GM12878 (cell line): ENCODE measurements at regions of chr3 and their contacts with region 1.

Region 1: GRCh38 chr3:121883507-121883906 is 10.7 kb upstream of the SLC15A2 start:
- DNase-seq: no peak
- ATAC-seq: peak; percentile 73
- H3K4me3 ChIP-seq: no peak overlapping the region
- H3K27ac ChIP-seq: no peak overlapping the region
- H3K4me1 ChIP-seq: no peaks in the 10 kb centered on the region
- H3K27me3 ChIP-seq: no peaks in the 10 kb centered on the region
- CTCF ChIP-seq: peak; percentile 21 to 38 (median 27); a peak in 1 of 6 replicates
- EP300 ChIP-seq: no peak
- POLR2A ChIP-seq: no peak
- RAD21 ChIP-seq: peak; percentile 48

Region 2: GRCh38 chr3:121654493-121655385 is 228.8 kb before region 1 on chr3:
- CTCF ChIA-PET with region 1: no interaction called
- POLR2A ChIA-PET with region 1: no interaction called
- RAD21 ChIA-PET with region 1: no interaction called
- SMC1A ChIA-PET with region 1: no interaction called
- in situ Hi-C with region 1: no loop called
- intact Hi-C with region 1: no loop called
- DNase-seq: peak; percentile 36
- ATAC-seq: peak; percentile 89
- H3K4me3 ChIP-seq: peak overlapping the region; percentile 12; the same call in 1 of the 2 replicates
- H3K27ac ChIP-seq: peak overlapping the region; percentile 68; the same call in 1 of the 2 replicates
- H3K4me1 ChIP-seq: peaks cover 34% of the 10 kb centered on the region
- H3K27me3 ChIP-seq: no peaks in the 10 kb centered on the region
- CTCF ChIP-seq: no peak
- EP300 ChIP-seq: 0 out of 4 replicates have a peak, but pooled peaks have one; percentile 16 to 21
- POLR2A ChIP-seq: no peak
- RAD21 ChIP-seq: no peak

Region 3: DNA sequence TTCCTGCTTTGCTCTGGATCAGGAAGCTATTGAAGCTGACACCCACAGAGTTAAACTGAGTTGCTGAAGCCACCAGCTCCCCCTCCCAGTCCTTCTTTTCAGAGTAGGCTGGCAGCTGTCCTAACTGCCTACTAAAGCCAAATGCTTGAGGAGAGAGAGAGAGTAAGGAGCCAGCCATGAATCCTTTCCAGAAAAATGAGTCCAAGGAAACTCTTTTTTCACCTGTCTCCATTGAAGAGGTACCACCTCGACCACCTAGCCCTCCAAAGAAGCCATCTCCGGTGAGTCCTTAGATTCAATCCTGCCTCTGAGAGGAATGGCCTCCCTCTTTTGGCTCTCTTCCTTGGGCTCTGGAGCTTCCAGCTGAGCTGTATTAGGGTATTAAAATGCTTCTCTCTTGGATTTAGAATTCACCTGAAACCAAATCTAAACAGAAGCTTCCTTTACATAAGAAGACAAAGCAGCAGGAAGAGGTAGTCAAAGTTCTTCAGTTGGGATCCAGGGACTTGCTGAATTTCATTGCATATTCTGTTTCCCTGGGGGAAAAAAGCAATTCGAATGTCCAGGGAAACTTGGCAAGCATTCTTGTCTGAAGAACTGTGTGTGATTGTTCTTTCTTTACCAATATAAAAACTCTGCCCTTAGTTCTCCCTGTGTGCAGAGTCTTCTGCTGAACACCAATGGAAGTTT is 10.9 kb after region 1 on chr3 and contains the start of gene SLC15A2:
- CTCF ChIA-PET with region 1: interaction called, 10 read pairs
- POLR2A ChIA-PET with region 1: no interaction called
- RAD21 ChIA-PET with region 1: no interaction called
- SMC1A ChIA-PET with region 1: interaction called, 8 read pairs
- in situ Hi-C with region 1: no loop called
- intact Hi-C with region 1: no loop called
- DNase-seq: no peak
- ATAC-seq: no peak
- H3K4me3 ChIP-seq: no peak within 1 kb of the TSS
- H3K27ac ChIP-seq: no peak within 1 kb of the TSS
- H3K4me1 ChIP-seq: no peaks in the 10 kb centered on the region
- H3K27me3 ChIP-seq: no peaks in the 10 kb centered on the region
- CTCF ChIP-seq: no peak
- EP300 ChIP-seq: no peak
- POLR2A ChIP-seq: no peak
- RAD21 ChIP-seq: no peak
- polyA plus RNA-seq, gene SLC15A2: 0.64 to 1.1 TPM

Region 4: DNA sequence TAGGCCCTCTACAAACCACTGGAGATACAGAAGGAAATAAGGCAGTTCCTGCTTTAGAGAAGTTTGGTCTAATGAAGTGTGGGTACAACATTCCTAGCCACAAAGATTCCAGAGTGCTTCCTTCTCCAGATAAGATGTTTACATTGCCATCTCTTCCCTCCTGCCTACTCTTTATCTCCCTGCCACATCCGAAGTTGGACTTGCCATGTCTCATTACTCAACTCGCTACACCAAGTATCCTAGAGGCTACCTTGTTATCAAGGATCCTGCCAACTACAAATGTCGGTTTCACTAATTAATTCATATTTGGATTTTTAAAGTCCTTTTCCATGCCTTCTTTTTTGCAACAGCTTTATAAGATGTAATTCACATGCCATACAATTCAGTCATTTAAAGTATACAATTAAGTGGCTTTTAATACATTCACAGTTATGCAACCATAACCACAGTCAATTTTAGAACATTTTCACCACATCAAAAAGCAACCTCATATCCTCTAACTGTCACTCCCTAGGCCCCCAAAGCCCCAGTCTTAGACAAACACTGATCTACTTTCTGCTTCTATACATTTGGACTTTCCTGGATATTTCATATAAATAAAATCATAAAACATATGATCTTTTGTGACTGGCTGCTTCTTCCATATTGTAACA is 387.9 kb after region 1 on chr3:
- CTCF ChIA-PET with region 1: no interaction called
- POLR2A ChIA-PET with region 1: no interaction called
- RAD21 ChIA-PET with region 1: no interaction called
- SMC1A ChIA-PET with region 1: no interaction called
- in situ Hi-C with region 1: no loop called
- intact Hi-C with region 1: loop called (anchors 10 kb)
- DNase-seq: no peak
- ATAC-seq: peak; percentile 58
- H3K4me3 ChIP-seq: peak overlapping the region; percentile 17; the same call in 1 of the 2 replicates
- H3K27ac ChIP-seq: peak overlapping the region; percentile 43
- H3K4me1 ChIP-seq: peaks cover 38% of the 10 kb centered on the region
- H3K27me3 ChIP-seq: no peaks in the 10 kb centered on the region
- CTCF ChIP-seq: no peak
- EP300 ChIP-seq: peak in 1 of 2 experiments; percentile 85; a peak in 3 of 4 replicates
- POLR2A ChIP-seq: no peak
- RAD21 ChIP-seq: no peak